HEK293 (cell line): ENCODE measurements at regions of chr6 and their contacts with region 1.

Region 1: DNA sequence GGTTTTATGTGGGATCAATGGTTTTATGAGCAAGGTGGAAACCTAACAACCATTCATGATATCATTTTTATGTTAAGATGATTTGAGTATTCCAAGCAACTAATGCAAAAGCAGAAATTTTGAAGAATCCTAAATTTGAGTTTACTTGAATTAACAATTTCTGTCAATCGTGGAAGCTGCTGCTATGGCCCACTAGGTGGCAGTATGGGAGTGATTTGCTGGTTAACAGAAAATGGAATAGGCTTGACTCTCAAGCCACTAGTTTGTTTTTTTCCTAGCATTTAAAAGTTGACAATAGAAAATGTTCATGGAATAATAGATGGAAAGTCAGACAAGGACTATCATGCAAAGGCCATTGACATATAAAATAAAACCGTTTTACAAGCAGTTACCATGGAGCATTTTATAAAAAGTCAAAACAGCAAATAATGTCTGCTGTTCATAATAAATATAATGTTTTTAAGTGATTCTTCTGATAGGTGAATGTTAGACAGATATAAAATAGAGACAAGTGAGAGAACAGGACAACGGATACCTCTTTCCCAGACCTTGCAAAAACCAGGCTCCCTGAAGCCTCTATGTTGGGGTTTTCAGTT is 43.0 kb upstream of the TMEM200A start:
- H3K4me3 ChIP-seq: no peak overlapping the region
- H3K27ac ChIP-seq: no peak overlapping the region
- H3K4me1 ChIP-seq: no peaks in the 10 kb centered on the region
- CTCF ChIP-seq: no peak

Region 2: GRCh38 chr6:130676077-130676772 is 353.5 kb after region 1 on chr6:
- CTCF ChIA-PET with region 1: interaction called, 10 read pairs
- POLR2A ChIA-PET with region 1: no interaction called
- H3K4me3 ChIP-seq: no peak overlapping the region
- H3K27ac ChIP-seq: no peak overlapping the region
- H3K4me1 ChIP-seq: no peaks in the 10 kb centered on the region
- CTCF ChIP-seq: no peak

Region 3: DNA sequence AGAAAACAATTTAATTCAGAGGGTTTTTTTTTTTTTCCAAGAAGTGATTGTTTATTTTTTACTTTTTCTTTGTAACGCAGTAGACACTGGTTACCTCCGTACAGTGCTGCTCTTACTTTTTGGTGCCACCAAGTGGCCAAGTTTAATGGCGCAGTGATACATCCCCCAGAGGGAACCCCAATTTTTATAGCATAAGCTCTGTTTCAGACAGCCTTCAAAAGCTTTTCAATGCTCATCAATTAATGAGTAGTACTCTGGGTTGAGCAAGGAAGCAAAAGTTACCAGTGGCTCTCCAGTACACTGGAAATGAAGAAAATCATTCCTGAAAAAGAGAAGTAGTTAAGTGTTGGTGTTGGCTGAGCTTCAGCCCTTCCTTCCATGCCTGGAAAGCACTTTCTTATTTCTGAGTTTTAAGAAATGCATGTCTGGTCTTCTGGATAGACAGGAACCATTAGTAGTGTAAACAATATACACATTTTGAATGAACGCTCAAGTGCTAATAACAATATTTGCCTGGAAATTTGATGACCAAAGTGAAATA is 375.3 kb after region 1 on chr6:
- CTCF ChIA-PET with region 1: interaction called, 28 read pairs
- POLR2A ChIA-PET with region 1: no interaction called
- H3K4me3 ChIP-seq: no peak overlapping the region
- H3K27ac ChIP-seq: no peak overlapping the region
- H3K4me1 ChIP-seq: no peaks in the 10 kb centered on the region
- CTCF ChIP-seq: peak; percentile 28; the same call in 1 of the 2 replicates

Region 4: GRCh38 chr6:130872250-130873095 is 549.7 kb after region 1 on chr6:
- CTCF ChIA-PET with region 1: interaction called, 12 read pairs
- POLR2A ChIA-PET with region 1: no interaction called
- H3K4me3 ChIP-seq: no peak overlapping the region
- H3K27ac ChIP-seq: no peak overlapping the region
- H3K4me1 ChIP-seq: no peaks in the 10 kb centered on the region
- CTCF ChIP-seq: peak; percentile 50